Colonic mucosa (tissue), 4 donors: ENCODE measurements at regions of chr3 and their contacts with region 1.

Region 1: GRCh38 chr3:51391075-51391567 is at the start of gene RBM15B:
- DNase-seq: peak; percentile 97
- H3K4me3 ChIP-seq: peak within 1 kb of the TSS; percentile 74
- H3K27ac ChIP-seq: peak within 1 kb of the TSS; percentile 53
- H3K4me1 ChIP-seq: peaks cover 47% of the 10 kb centered on the region
- H3K27me3 ChIP-seq: no peaks in the 10 kb centered on the region
- CTCF ChIP-seq: peak; percentile 74
- total RNA-seq, gene RBM15B: 31.8 to 35.4 TPM

Region 2: GRCh38 chr3:51434746-51435327 is 43.7 kb after region 1 on chr3:
- intact Hi-C with region 1: loop called (anchors 2 kb)
- DNase-seq: peak; percentile 47
- H3K4me3 ChIP-seq: no peak overlapping the region
- H3K27ac ChIP-seq: no peak overlapping the region
- H3K4me1 ChIP-seq: no peaks in the 10 kb centered on the region
- H3K27me3 ChIP-seq: no peaks in the 10 kb centered on the region
- CTCF ChIP-seq: peak; percentile 70

Region 3: GRCh38 chr3:51670823-51671733 is 280.0 kb after region 1 on chr3 and contains the start of gene TEX264:
- intact Hi-C with region 1: loop called (anchors 10 kb)
- DNase-seq: peak; percentile 92
- H3K4me3 ChIP-seq: peak within 1 kb of the TSS; percentile 90
- H3K27ac ChIP-seq: peak within 1 kb of the TSS; percentile 94
- H3K4me1 ChIP-seq: peaks cover 17% of the 10 kb centered on the region
- H3K27me3 ChIP-seq: no peaks in the 10 kb centered on the region
- CTCF ChIP-seq: no peak
- total RNA-seq, gene TEX264: 54.0 to 92.3 TPM

Region 4: DNA sequence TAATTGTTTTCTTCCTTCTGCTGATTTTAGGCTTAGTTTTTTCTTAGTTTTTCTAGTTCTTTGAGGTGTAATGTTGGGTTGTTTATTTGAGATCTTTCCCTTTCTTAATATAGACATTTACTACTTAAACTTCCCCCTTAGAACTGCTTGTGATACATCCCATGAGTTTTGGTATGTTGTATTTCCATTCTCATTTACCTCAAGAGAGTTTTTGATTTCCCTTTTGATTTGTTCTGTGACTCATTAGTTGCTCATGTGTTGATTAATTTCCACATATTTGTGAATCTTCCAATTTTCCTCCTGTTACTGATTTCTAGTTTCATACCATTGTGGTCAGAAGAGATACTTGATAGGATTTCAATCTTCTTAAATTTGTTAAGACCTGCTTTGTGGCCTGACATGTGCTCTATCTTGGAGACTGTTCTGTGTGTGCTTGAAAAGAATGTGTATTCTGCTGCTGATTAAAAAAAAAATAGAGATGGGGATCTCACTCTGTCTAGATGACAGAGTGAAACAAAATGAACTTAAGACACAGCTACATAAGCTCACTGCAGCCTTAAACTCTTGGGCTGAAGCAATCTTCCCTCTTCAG is 338.0 kb after region 1 on chr3:
- intact Hi-C with region 1: no loop called
- DNase-seq: no peak
- H3K4me3 ChIP-seq: no peak overlapping the region
- H3K27ac ChIP-seq: no peak overlapping the region
- H3K4me1 ChIP-seq: no peaks in the 10 kb centered on the region
- H3K27me3 ChIP-seq: no peaks in the 10 kb centered on the region
- CTCF ChIP-seq: no peak